HCT116 (cell line): ENCODE measurements at regions of chr13 and their contacts with region 1.

Region 1: DNA sequence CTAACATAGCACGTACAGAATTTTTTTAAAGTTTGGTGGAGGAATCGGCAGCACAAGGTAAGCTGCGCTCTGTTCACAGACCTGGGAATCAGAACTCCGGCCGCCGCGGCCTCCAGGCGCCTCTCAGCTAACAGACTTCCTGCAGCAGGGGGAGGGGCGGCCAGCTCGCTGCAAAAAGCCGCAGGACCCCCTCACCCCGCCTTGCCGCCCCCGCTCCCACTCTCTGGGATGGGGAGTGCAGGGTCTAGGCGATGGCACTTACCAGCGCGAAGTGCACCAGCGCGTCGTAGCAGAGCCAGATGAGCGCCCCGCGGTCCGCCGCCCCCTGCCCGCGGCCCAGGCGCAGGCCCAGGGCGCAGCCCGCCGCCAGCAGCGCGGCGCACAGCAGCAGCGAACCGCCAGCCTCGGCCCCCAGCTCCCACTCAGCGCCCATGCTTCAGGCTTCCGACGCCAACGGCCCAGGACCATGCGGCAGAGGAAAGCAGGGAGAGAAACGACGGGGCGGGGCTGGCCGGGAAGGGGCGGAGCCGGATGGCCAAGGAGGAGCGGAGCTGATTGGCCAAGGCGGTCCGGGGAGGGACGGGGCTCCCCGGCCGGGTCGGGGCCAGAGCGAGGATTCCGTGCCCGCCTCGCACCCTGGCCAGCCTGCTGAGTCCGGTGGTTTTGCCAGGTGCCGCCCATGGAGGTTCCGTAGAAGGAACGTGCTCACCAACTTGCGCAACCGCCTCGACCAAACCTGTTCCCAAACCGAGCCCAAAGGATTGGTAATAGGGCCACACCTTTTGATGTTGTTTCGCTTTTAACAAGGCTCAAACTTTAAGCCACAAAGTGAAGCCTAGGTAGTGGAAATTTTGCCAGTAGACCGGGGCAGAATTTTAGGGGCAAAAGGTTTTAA is at the start of gene EBPL:
- DNase-seq: peak; percentile 78
- ATAC-seq: peak; percentile 97
- H3K4me3 ChIP-seq: peak within 1 kb of the TSS; percentile 77 to 84
- H3K27ac ChIP-seq: peak within 1 kb of the TSS; percentile 78
- H3K4me1 ChIP-seq: peaks cover 6 to 19% of the 10 kb centered on the region in 2 experiments; a peak in 3 of 4 replicates
- H3K27me3 ChIP-seq: no peaks in the 10 kb centered on the region
- CTCF ChIP-seq: no peak
- POLR2A ChIP-seq: peak; percentile 22
- RAD21 ChIP-seq: no peak
- total RNA-seq, gene EBPL: 73.2 TPM

Region 2: GRCh38 chr13:49792550-49793324 is 101.5 kb after region 1 on chr13 and contains the start of gene KPNA3:
- CTCF ChIA-PET with region 1: no interaction called
- POLR2A ChIA-PET with region 1: no interaction called
- RAD21 ChIA-PET with region 1: no interaction called
- intact Hi-C with region 1: loop called (anchors 2 kb)
- DNase-seq: peak; percentile 91
- ATAC-seq: peak; percentile 92
- H3K4me3 ChIP-seq: peak within 1 kb of the TSS; percentile 55 to 91
- H3K27ac ChIP-seq: peak within 1 kb of the TSS; percentile 95
- H3K4me1 ChIP-seq: peaks cover 6 to 40% of the 10 kb centered on the region in 2 experiments; a peak in 3 of 4 replicates
- H3K27me3 ChIP-seq: no peaks in the 10 kb centered on the region
- CTCF ChIP-seq: no peak
- POLR2A ChIP-seq: peak; percentile 71
- RAD21 ChIP-seq: no peak
- total RNA-seq, gene KPNA3: 45.0 TPM

Region 3: DNA sequence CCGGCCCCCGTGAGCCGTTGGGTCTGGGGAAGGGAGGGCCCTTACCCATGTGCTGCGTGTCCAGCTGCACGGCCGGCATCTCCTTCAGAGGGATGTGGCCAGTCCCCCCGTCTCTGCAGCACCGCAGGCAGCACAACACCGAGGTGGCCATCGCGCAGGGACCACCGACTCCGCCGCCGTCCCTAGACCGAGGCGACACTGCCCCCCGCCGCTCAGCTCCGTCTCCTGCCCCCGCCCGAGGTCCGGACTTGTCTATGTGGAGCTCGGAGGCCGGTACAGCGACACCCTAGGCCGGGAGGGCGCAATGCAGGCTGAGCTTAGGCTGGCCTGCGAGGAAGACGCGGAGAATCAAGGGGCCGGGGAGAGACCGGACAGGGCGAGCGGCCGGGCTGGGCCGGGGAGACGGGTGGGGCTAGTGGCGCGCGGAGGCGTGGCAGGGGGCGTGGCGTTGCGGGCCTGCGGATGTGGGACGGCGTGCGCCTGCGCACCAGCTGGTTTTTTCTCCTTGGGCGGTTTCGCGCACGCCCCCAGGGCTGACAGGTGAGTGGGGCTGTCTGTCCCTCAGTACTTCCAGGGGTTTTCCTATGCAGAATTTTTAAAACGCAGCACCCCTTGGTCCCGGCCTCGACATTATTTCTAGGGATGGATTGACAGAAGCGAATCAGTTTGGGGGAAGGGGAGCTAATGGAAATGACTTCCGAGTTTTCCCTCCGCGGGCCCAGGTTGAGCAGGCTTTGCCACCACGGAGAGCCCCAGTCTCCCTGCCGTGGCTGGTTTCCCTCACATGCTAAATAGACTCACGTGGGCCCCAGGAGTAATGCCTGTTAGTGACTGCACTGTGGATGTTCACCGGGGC is 245.1 kb after region 1 on chr13 and contains the start of gene SPRYD7:
- CTCF ChIA-PET with region 1: no interaction called
- POLR2A ChIA-PET with region 1: no interaction called
- RAD21 ChIA-PET with region 1: no interaction called
- intact Hi-C with region 1: loop called (anchors 10 kb)
- DNase-seq: peak; percentile 97
- ATAC-seq: peak; percentile 96
- H3K4me3 ChIP-seq: peak within 1 kb of the TSS; percentile 72 to 79
- H3K27ac ChIP-seq: peak within 1 kb of the TSS; percentile 80
- H3K4me1 ChIP-seq: peaks cover 0 to 16% of the 10 kb centered on the region in 2 experiments; a peak in 2 of 4 replicates
- H3K27me3 ChIP-seq: no peaks in the 10 kb centered on the region
- CTCF ChIP-seq: peak; percentile 80 to 92 (median 85)
- POLR2A ChIP-seq: no peak
- RAD21 ChIP-seq: peak; percentile 42
- total RNA-seq, gene SPRYD7: 11.3 TPM

Region 4: DNA sequence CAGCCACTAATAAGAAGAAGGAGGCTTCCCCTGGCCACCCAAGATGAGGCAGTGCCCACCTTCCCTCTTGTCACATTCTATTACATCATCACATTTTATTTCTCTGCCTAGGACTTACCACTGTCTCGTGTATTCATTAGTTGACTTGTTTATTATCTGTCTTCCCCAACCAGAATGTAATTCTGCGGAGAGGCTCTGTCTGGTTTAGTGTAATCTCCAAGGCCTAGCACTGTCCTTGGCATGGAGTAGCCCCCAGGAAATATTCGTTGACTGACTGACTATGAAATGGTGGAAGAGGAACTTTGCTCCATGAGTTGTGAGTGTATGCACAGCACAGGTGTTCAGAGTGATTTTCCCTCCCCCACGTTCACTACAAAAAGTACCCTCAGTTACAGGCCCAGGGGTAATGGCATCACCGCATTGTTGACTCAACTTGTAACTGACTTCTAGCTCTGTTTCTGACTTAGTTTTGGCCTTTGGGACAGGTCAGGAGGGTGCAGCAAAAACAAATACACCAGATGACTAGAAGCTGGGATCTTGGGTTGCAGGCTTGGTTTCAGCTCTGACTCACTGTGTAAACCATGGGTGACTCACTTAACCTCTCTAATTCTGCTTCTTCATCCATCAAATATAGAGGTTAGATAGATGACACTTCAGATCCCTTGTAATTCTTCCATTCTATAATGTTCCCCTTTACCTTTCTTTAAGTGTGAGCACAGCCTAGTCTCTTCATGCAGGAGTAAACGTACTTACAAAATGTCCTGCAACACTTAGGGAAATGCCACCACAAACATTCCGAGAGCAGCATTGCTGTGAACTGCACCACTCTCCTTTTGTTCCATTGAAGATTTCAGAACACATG is 553.7 kb after region 1 on chr13:
- CTCF ChIA-PET with region 1: no interaction called
- POLR2A ChIA-PET with region 1: no interaction called
- RAD21 ChIA-PET with region 1: no interaction called
- intact Hi-C with region 1: no loop called
- DNase-seq: peak; percentile 79
- ATAC-seq: peak; percentile 98
- H3K4me3 ChIP-seq: peak overlapping the region in 1 of 2 experiments; percentile 33; a peak in 2 of 4 replicates
- H3K27ac ChIP-seq: peak overlapping the region; percentile 33; the same call in 1 of the 2 replicates
- H3K4me1 ChIP-seq: peaks cover 26 to 28% of the 10 kb centered on the region in 2 experiments
- H3K27me3 ChIP-seq: 0 out of 2 replicates have a peak, but pooled peaks cover 3% of the 10 kb centered on the region
- CTCF ChIP-seq: no peak
- POLR2A ChIP-seq: no peak
- RAD21 ChIP-seq: peak; percentile 18; the same call in 1 of the 2 replicates